Tibial artery (tissue), 4 donors: ENCODE measurements at regions of chr11 and their contacts with region 1.

Region 1: GRCh38 chr11:67082035-67082791 is 25.6 kb downstream of the RHOD start:
- DNase-seq: no peak
- H3K4me3 ChIP-seq: no peak overlapping the region
- H3K27ac ChIP-seq: no peak overlapping the region
- H3K4me1 ChIP-seq: peaks cover 0 to 17% (median 9%) of the 10 kb centered on the region in 4 donors
- H3K27me3 ChIP-seq: peaks cover 0 to 4% of the 10 kb centered on the region in 2 donors
- CTCF ChIP-seq: no peak

Region 2: GRCh38 chr11:67167086-67167485 is 84.9 kb after region 1 on chr11:
- intact Hi-C with region 1: loop called (anchors 5 kb)
- DNase-seq: no peak
- H3K4me3 ChIP-seq: no peak overlapping the region
- H3K27ac ChIP-seq: no peak overlapping the region
- H3K4me1 ChIP-seq: peaks cover 0 to 23% (median 7%) of the 10 kb centered on the region in 4 donors
- H3K27me3 ChIP-seq: no peaks in the 10 kb centered on the region
- CTCF ChIP-seq: no peak

Region 3: GRCh38 chr11:67230406-67230805 is 148.2 kb after region 1 on chr11:
- intact Hi-C with region 1: loop called (anchors 10 kb)
- DNase-seq: no peak
- H3K4me3 ChIP-seq: no peak overlapping the region
- H3K27ac ChIP-seq: no peak overlapping the region
- H3K4me1 ChIP-seq: no peaks in the 10 kb centered on the region
- H3K27me3 ChIP-seq: no peaks in the 10 kb centered on the region
- CTCF ChIP-seq: no peak